Right lobe of liver (tissue), 6 donors: ENCODE measurements at regions of chr9 and their contacts with region 1.

Region 1: GRCh38 chr9:87662808-87663528 is 63.0 kb upstream of the CTSL start:
- DNase-seq: peak; percentile 81 to 83 (median 82)
- ATAC-seq: peak; percentile 84 to 92 (median 88)
- H3K4me3 ChIP-seq: no peak overlapping the region
- H3K27ac ChIP-seq: no peak overlapping the region
- H3K4me1 ChIP-seq: no peaks in the 10 kb centered on the region
- H3K27me3 ChIP-seq: no peaks in the 10 kb centered on the region
- CTCF ChIP-seq: peak; percentile 73 to 82 (median 78)
- POLR2A ChIP-seq: no peak

Region 2: DNA sequence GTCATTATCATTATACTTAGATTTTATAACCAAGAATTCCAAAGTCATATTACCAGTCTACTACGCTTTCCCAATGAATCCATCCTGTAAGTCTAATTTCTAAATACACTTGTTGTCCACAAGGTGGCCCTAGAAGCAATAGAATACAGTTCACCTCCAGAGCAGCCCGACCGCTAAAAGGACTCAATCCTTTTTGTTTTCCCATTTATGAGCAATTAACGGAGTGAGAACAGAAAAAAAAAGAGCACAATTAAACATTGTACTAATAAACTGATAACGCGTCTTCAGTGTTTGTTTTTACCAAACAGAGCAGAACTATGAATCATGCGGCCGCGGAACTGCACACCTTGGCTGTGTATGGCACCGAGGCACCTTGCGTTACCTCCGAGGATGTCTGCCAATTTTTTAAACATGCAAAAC is 326.0 kb before region 1 on chr9:
- intact Hi-C with region 1: loop called (anchors 5 to 10 kb)
- DNase-seq: peak in 1 of 3 donors; percentile 54
- ATAC-seq: peak; percentile 85 to 93 (median 88)
- H3K4me3 ChIP-seq: peak overlapping the region; percentile 12 to 56 (median 53)
- H3K27ac ChIP-seq: peak overlapping the region in 2 of 3 donors; percentile 61 to 62
- H3K4me1 ChIP-seq: peaks cover 0 to 4% (median 2%) of the 10 kb centered on the region in 4 donors
- H3K27me3 ChIP-seq: no peaks in the 10 kb centered on the region
- CTCF ChIP-seq: peak; percentile 52 to 91 (median 66)
- POLR2A ChIP-seq: no peak